A549 (cell line): ENCODE measurements at regions of chr2 and their contacts with region 1.

Region 1: DNA sequence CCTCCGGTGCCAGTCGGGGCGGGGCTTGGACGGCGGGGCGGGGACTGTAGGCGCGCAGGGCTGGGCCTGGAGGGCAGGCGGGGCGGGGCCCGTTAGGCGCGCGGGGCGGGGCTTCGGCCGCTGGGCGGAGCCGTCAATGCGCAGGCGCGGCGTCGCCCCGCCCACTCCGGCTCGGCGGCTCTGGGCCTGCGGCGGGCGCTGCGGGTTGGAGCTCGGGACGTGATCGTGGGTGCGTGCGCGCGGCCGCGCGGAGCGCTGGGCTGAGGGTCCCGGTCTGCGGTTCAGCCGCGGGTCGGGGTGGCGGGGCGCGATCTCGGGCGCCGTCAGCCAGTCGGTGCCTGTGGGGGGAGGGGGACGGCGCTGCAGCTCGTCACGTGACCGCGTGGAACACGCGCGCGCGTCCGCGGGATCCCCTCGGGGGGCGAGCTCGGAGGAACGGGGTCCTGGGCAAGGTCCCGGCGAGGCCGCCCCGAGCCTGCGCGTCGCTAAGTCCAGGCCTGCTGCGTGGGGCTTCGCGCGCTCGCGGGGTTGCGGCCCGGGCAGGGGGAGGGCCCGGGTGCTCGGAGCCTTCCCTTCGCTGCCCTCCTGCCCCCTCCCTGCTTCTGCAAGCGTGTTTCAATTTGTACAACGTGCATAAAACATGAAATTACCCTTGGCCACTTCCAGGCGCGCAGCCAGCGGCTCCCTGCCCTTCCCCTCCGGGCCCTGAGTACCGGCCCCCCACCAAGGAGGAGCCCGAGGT is at the start of gene D2HGDH:
- DNase-seq: peak; percentile 63 to 86
- ATAC-seq: peak; percentile 74 to 83
- H3K4me3 ChIP-seq: peak within 1 kb of the TSS; percentile 97
- H3K27ac ChIP-seq: peak within 1 kb of the TSS; percentile 99
- H3K4me1 ChIP-seq: peaks cover 5% of the 10 kb centered on the region; the same call in 1 of the 3 replicates
- CTCF ChIP-seq: no peak
- EP300 ChIP-seq: no peak
- POLR2A ChIP-seq: peak; percentile 92
- RAD21 ChIP-seq: no peak
- polyA plus RNA-seq, gene D2HGDH: 6.5 and 7.0 TPM in 2 replicates

Region 2: DNA sequence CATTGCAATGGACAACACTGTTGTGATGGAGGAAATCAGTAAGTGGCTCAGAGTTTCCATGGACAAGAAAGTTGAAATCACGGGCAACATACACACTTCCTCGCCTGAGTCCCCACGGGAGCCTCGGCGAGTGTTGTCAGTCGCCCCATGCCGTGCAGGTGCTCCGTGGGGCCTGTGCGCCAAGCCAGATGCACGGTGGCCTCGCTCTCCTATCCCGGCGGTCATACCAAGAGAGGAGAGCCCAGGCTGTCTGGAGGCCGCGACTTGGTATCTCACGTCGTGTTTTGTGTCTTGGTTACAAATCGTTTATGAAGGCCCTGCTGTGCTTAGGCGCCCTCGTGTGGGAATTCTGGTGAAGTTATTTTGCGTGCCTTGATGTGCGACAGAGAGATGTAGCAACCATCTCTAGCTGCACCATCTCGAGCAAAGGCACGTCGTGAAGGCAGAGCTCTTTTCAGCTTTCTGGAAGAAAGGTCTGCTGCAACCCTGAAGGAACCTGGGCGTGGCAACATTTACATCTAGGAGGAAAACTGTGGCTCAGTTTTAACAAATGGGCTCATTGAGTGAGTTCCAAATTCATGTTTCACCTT is 75.4 kb before region 1 on chr2:
- CTCF ChIA-PET with region 1: no interaction called
- POLR2A ChIA-PET with region 1: no interaction called
- DNase-seq: peak; percentile 27 to 82
- ATAC-seq: peak; percentile 83 to 87
- H3K4me3 ChIP-seq: no peak overlapping the region
- H3K27ac ChIP-seq: no peak overlapping the region
- H3K4me1 ChIP-seq: no peaks in the 10 kb centered on the region
- CTCF ChIP-seq: peak; percentile 64
- EP300 ChIP-seq: no peak
- POLR2A ChIP-seq: no peak
- RAD21 ChIP-seq: peak; percentile 67 to 76

Region 3: DNA sequence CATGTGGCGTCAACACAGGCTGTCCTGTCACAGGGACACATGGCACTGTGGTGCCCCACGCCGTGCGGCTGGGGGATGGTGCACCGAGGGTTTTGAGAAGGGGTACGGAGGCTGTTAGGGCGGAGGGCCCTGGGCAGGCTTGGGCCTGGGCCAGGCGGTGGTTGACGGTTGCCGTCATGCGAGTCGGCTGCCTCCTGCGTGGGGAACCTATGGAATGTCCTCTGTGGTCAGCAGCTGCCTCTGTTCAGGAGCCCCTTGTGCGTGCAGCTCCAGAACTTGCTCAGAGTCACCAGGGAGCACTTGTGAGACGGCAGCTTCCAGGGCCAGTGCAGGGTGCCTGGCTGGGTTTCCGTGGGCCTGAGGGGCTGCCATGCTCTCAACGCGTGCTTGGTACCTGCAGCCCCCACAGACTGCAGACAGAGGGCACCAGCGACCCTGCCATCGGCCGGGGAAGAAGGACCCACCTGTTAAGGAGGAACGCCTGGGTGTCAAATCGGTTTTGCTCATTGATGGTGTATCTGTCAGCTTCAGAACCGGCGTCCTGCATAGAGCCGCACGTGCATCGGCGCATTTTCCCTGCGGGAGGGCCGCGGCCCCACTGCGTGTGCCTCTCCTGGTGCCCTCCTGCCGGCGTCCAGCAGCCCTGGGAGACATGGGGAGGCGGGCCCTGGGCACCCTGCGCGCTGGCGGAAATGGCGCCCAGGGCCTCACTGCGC is 10.2 kb before region 1 on chr2:
- CTCF ChIA-PET with region 1: interaction called, 11 read pairs
- POLR2A ChIA-PET with region 1: no interaction called
- DNase-seq: no peak
- ATAC-seq: peak in 1 of 2 experiments; percentile 37; a peak in 3 of 6 replicates
- H3K4me3 ChIP-seq: no peak overlapping the region
- H3K27ac ChIP-seq: no peak overlapping the region
- H3K4me1 ChIP-seq: no peaks in the 10 kb centered on the region
- CTCF ChIP-seq: no peak
- EP300 ChIP-seq: no peak
- POLR2A ChIP-seq: no peak
- RAD21 ChIP-seq: no peak